ENCODE measurements at regions of chr14 and their contacts with region 1.

Region 1: GRCh38 chr14:54566410-54567223 is at the start of gene SAMD4A:
- DNase-seq: peak; percentile 95
- ATAC-seq: peak; percentile 33
- H3K4me3 ChIP-seq: peak within 1 kb of the TSS; percentile 85
- H3K27ac ChIP-seq: peak within 1 kb of the TSS; percentile 79
- H3K4me1 ChIP-seq: peaks cover 42% of the 10 kb centered on the region
- H3K27me3 ChIP-seq: no peaks in the 10 kb centered on the region
- CTCF ChIP-seq: peak; percentile 53; the same call in 1 of the 2 replicates
- total RNA-seq, gene SAMD4A: 42.9 and 45.2 TPM in 2 replicates

Region 2: DNA sequence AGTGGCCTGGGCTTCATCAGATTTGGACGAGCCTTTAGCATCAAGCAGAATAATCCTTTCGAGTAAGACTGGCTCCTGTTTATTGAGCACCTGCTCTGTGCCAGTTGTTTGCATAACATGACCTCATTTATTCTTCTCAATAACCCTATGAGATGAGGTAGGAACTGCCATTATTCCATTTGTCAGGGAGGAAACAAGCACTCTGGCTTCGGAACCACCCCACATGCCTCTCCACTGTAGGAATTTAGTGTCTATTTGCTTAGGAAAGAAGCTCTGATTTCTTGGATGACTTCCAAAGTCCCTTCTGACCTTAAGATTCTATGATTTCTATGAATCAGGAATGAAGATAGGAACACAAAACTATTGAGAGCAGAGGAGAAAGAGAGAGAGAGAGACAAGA is 11.4 kb after region 1 on chr14:
- CTCF ChIA-PET with region 1: interaction called, 14 read pairs
- POLR2A ChIA-PET with region 1: interaction called, 19 read pairs
- intact Hi-C with region 1: no loop called
- DNase-seq: peak; percentile 92
- ATAC-seq: peak; percentile 78
- H3K4me3 ChIP-seq: no peak overlapping the region
- H3K27ac ChIP-seq: no peak overlapping the region
- H3K4me1 ChIP-seq: peaks cover 16% of the 10 kb centered on the region
- H3K27me3 ChIP-seq: no peaks in the 10 kb centered on the region
- CTCF ChIP-seq: no peak

Region 3: DNA sequence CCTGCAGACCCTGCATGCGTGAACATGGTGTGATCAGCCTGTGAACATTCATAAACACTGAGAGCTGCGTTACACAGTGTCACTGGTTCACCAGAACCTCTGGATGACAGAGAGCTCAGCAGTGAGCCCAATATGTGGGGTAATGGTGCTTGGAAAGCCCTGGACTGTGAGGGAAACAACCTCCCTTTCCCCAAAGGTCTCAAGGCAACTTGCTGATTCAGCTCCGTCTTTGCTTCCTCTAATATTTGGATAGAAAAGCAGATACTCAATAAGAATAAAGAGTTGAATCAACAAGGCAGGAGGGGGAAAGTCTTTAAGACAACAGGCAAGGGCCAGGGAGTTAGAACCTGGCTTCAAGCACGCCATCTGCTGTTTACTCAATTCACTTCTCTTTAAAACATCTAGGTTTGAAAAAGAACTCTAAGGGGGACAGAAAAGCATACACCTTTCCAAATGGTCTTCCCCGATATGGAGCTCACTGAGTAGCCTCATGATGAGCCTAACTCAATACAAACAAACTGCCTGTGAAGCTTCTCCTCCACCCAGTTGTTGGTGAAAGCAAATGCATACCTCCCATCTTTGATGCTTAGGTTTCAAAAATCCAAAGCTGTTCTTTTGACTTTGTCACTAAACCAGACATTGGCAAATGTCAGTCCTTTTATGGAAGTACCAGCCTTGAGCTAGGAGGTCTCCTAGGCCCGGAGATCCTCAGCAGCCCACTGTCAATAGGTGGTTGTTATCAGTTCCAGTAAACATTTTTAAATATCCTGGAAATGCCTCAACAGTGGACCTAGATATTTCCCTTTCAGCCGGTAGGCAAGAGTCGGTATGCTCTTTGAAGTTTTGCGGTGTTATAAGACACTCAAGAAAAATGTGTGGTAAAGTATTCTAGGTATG is 76.4 kb after region 1 on chr14:
- CTCF ChIA-PET with region 1: interaction called, 4 read pairs
- POLR2A ChIA-PET with region 1: interaction called, 5 read pairs
- intact Hi-C with region 1: loop called (anchors 1 kb)
- DNase-seq: peak; percentile 46
- ATAC-seq: no peak
- H3K4me3 ChIP-seq: no peak overlapping the region
- H3K27ac ChIP-seq: no peak overlapping the region
- H3K4me1 ChIP-seq: peaks cover 20% of the 10 kb centered on the region
- H3K27me3 ChIP-seq: no peaks in the 10 kb centered on the region
- CTCF ChIP-seq: peak; percentile 63

Region 4: GRCh38 chr14:54676812-54677708 is 110.4 kb after region 1 on chr14:
- CTCF ChIA-PET with region 1: no interaction called
- POLR2A ChIA-PET with region 1: interaction called, 4 read pairs
- intact Hi-C with region 1: loop called (anchors 1 kb)
- DNase-seq: peak; percentile 99
- ATAC-seq: peak; percentile 95
- H3K4me3 ChIP-seq: peak overlapping the region; percentile 46
- H3K27ac ChIP-seq: peak overlapping the region; percentile 80
- H3K4me1 ChIP-seq: peaks cover 49% of the 10 kb centered on the region
- H3K27me3 ChIP-seq: no peaks in the 10 kb centered on the region
- CTCF ChIP-seq: no peak

Region 5: DNA sequence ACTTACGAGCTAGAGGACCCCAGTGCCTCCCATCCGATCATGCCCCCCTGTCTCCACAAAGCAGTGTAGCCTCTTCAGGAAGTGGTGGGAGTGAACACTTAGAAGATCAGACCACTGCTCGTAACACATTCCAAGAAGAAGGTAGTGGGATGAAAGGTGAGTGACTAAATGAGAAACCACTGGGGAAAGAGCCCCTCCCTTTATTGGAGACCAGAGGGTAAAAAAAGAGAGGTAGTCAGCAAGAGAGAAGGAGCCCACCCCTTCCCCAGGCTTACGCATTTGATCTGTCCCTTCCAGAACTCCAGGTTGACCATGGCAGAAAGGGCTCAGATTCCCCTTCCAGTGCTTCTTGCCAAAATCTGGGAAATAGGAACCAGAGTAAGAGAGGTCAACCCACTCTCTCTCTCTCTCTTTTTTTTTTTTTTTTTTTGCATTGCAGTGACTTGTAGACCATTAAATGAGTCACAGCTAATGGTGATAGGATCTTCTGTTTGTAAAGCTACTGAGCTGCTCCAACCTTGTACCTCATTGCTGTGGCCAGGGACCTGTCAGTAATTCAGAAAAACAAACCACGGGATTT is 170.6 kb after region 1 on chr14:
- CTCF ChIA-PET with region 1: interaction called, 12 read pairs
- POLR2A ChIA-PET with region 1: interaction called, 5 read pairs
- intact Hi-C with region 1: loop called (anchors 1 kb)
- DNase-seq: peak; percentile 94
- ATAC-seq: peak; percentile 81
- H3K4me3 ChIP-seq: peak overlapping the region; percentile 50
- H3K27ac ChIP-seq: peak overlapping the region; percentile 91
- H3K4me1 ChIP-seq: peaks cover 37% of the 10 kb centered on the region
- H3K27me3 ChIP-seq: no peaks in the 10 kb centered on the region
- CTCF ChIP-seq: no peak

Region 6: DNA sequence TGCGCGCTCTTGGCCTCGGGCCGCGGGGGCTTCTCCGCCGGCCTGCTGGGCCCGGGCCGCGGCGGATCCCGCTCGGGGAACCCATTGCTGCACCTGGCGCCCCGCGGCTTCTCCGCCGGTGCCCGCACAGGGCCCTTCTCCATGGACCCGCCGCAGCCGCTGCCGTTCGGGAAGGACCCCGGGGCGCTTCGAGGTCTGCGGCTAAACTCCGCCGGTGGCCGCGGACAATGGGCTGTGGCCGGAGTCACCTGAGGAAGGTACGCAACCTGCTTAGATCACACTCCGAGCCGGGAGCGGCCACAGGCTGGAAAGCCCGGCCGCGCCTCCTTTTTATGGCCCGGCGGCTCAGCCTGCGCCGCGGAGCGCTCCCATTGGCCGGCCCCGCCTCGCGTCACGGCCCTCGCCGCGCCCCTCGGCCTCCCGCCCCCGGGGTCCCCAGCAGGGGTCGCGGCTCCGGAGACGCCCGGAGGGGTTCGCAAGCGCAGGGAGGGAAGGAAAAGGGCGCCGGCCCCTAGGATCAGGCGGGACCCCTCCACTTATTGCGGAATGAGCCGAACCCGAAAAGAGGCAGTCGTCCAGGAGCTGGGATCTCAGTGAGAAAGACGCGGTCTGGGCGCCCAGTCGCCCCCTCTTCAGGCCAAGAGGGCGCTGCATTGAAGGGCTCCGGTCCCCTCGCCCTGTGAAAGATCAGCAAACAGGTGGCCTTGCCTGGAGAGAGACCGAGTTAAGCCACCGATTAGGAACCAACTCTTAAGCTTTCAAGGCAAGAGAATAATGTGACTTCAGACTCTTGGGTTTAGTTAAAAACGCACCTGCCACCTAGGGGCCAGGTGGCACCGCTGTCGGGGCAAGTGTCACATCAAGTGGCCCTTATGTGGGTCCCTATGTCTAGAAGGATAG is 336.2 kb after region 1 on chr14 and contains the start of gene GCH1:
- CTCF ChIA-PET with region 1: interaction called, 5 read pairs
- POLR2A ChIA-PET with region 1: no interaction called
- intact Hi-C with region 1: loop called (anchors 2 kb)
- DNase-seq: peak; percentile 92
- ATAC-seq: peak; percentile 87
- H3K4me3 ChIP-seq: peak within 1 kb of the TSS; percentile 86
- H3K27ac ChIP-seq: peak within 1 kb of the TSS; percentile 41
- H3K4me1 ChIP-seq: peaks cover 9% of the 10 kb centered on the region
- H3K27me3 ChIP-seq: no peaks in the 10 kb centered on the region
- CTCF ChIP-seq: peak; percentile 93
- total RNA-seq, gene GCH1: 26.6 and 26.9 TPM in 2 replicates